Sigmoid colon (tissue), 7 donors: ENCODE measurements at regions of chr3 and their contacts with region 1.

Region 1: GRCh38 chr3:106824856-106825255 is 552.4 kb upstream of the CCDC54 start:
- DNase-seq: no peak
- H3K4me3 ChIP-seq: no peak overlapping the region
- H3K27ac ChIP-seq: no peak overlapping the region
- H3K4me1 ChIP-seq: peaks cover 0 to 21% (median 18%) of the 10 kb centered on the region in 4 donors
- H3K27me3 ChIP-seq: no peaks in the 10 kb centered on the region
- CTCF ChIP-seq: peak in 1 of 4 experiments; percentile 11
- EP300 ChIP-seq: no peak
- POLR2A ChIP-seq: no peak

Region 2: GRCh38 chr3:106963442-106963841 is 138.6 kb after region 1 on chr3:
- intact Hi-C with region 1: no loop called
- DNase-seq: no peak
- H3K4me3 ChIP-seq: no peak overlapping the region
- H3K27ac ChIP-seq: no peak overlapping the region
- H3K4me1 ChIP-seq: peaks cover 0 to 23% (median 12%) of the 10 kb centered on the region in 4 donors
- H3K27me3 ChIP-seq: no peaks in the 10 kb centered on the region
- CTCF ChIP-seq: no peak
- EP300 ChIP-seq: no peak
- POLR2A ChIP-seq: no peak

Region 3: GRCh38 chr3:107064445-107065060 is 239.7 kb after region 1 on chr3:
- intact Hi-C with region 1: loop called (anchors 10 kb)
- DNase-seq: peak; percentile 74
- H3K4me3 ChIP-seq: no peak overlapping the region
- H3K27ac ChIP-seq: no peak overlapping the region
- H3K4me1 ChIP-seq: peaks cover 0 to 22% (median 15%) of the 10 kb centered on the region in 4 donors
- H3K27me3 ChIP-seq: no peaks in the 10 kb centered on the region
- CTCF ChIP-seq: peak; percentile 10 to 80 (median 58)
- EP300 ChIP-seq: no peak
- POLR2A ChIP-seq: no peak